ENCODE measurements at regions of chr20 and their contacts with region 1.

Region 1: GRCh38 chr20:31684153-31685015 is 38.3 kb downstream of the BCL2L1 start:
- DNase-seq: no peak
- ATAC-seq: peak; percentile 82
- H3K4me3 ChIP-seq: peak overlapping the region; percentile 44; the same call in 1 of the 2 replicates
- H3K27ac ChIP-seq: peak overlapping the region; percentile 35
- H3K4me1 ChIP-seq: peaks cover 26% of the 10 kb centered on the region
- H3K27me3 ChIP-seq: no peaks in the 10 kb centered on the region
- CTCF ChIP-seq: no peak
- EP300 ChIP-seq: no peak
- POLR2A ChIP-seq: no peak
- RAD21 ChIP-seq: no peak

Region 2: DNA sequence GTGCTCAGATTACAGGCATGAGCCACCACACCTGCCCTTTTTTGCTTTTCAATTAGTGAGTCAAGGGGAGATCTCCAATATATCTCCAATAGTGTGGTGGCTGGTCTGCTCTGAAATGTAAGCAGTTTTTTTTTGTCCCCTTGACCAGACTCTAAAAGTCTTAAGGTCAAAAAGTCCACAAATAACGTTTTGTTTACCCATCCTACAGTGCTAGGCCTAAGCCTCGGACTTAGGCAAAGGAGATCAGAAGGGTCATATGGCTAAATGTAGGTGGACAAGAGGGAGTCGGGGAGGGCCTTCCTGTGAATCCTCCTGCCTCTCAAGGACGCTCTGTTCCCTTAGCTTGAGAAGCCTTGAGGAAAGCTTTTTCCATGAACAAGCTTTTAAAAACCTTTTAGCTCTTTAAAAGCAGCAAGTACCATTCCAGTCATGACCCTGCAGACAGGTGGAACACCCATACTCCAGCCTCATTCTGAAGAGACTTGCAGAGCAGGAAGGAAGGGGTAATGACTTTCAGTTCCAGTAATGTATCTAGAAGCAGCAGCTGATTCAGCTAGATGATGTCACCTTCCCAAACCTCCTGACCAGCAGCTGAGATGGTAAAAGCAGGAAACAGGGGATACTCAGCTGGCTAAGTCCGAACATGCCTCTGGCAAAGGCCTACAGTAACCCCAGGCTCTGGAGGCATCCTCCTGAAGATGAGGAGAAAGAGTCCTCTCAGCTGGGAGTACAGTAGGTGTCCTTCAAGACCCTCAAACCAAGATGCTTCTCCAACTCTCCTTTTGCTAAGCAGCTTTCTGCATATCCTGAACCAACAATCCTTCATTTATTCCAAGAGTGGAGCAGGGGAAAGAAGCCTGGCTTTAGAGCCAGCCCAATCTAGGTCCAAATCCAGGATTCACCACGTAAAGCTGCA is 14.7 kb after region 1 on chr20:
- CTCF ChIA-PET with region 1: interaction called, 22 read pairs
- POLR2A ChIA-PET with region 1: interaction called, 8 read pairs
- RAD21 ChIA-PET with region 1: interaction called, 15 read pairs
- SMC1A ChIA-PET with region 1: interaction called, 26 read pairs
- in situ Hi-C with region 1: no loop called
- intact Hi-C with region 1: no loop called
- DNase-seq: no peak
- ATAC-seq: peak; percentile 96
- H3K4me3 ChIP-seq: peak overlapping the region; percentile 30; the same call in 1 of the 2 replicates
- H3K27ac ChIP-seq: peak overlapping the region; percentile 60
- H3K4me1 ChIP-seq: peaks cover 21% of the 10 kb centered on the region
- H3K27me3 ChIP-seq: no peaks in the 10 kb centered on the region
- CTCF ChIP-seq: no peak
- EP300 ChIP-seq: no peak
- POLR2A ChIP-seq: no peak
- RAD21 ChIP-seq: no peak

Region 3: DNA sequence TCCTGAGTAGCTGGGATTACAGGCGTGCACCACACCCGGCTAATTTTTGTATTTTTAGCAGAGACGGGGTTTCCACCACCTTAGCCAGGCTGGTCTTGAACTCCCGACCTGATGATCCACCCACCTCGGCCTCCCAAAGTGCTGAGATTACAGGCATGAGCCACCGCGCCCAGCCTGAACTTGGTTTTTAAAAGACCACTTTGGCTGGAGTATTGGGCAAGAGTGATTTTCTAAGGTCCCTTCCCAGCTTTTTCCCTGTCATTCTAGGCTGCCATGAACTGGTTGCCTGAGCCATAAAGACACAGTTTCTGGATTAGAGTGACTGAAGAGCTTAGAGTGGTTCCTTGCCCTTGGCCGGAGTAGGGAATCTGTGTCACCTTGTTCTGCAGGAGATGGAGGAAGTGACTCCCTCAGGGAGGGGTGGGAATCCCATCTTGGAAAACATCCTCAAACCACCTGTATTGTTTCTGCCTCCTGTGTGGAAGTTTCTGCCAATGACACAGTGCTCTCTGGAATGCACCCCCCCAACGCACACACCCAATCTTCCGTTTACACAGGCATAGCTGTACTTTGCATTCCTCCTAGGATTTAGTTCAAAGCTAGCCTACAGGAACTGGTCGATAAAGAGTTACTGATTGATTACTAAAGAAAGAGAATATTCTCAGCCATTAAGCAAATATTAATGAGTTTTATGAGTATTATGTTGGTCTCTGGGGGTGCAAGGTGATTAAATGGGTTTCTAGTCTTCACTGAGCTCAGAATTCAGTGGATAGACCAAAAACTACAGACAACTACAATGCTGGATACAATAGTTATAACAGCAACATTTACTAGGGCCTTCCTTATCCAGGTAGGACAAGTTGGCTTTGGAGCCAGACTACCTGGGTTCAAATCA is 20.1 kb after region 1 on chr20:
- CTCF ChIA-PET with region 1: interaction called, 22 read pairs
- POLR2A ChIA-PET with region 1: interaction called, 8 read pairs
- RAD21 ChIA-PET with region 1: interaction called, 21 read pairs
- SMC1A ChIA-PET with region 1: interaction called, 26 read pairs
- in situ Hi-C with region 1: no loop called
- intact Hi-C with region 1: no loop called
- DNase-seq: no peak
- ATAC-seq: no peak
- H3K4me3 ChIP-seq: no peak overlapping the region
- H3K27ac ChIP-seq: no peak overlapping the region
- H3K4me1 ChIP-seq: peaks cover 37% of the 10 kb centered on the region
- H3K27me3 ChIP-seq: no peaks in the 10 kb centered on the region
- CTCF ChIP-seq: no peak
- EP300 ChIP-seq: no peak
- POLR2A ChIP-seq: no peak
- RAD21 ChIP-seq: no peak

Region 4: DNA sequence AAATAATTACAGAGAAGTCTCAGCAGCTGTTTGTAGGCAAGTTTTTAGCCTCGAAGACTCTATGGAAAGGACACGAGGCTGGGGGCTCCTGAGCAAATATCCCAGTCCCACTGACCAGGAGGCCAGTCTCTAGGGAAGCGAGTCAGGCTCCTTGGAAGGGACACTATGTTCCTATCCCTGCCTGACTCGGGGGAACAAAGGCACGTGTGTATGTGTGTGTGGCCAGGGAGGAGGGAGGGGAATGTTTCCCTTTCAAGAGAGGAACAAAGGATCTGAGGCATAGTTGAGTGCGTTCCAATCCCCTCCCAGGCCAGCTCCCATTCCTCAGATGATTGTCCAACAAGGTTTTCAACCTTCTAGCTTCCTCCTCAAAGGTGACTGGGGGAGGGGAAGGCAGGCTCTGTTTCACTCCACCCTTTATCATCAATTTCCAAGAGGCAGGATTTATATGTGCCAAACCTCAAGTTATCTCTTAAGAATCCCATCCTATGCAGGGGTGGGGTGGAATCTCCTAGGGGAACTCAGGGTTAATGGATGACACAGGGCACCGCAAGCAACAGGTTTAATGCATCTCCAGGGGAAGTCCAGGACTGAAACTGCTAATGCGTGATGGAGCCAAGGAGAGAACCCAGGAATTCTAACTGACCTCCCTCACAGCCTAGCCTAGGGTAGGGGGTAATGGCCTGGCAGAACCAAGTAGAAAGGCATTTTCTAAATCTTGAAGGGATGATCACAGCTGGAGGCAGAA is 28.4 kb after region 1 on chr20:
- CTCF ChIA-PET with region 1: interaction called, 254 read pairs
- POLR2A ChIA-PET with region 1: interaction called, 36 read pairs
- RAD21 ChIA-PET with region 1: interaction called, 60 read pairs
- SMC1A ChIA-PET with region 1: interaction called, 146 read pairs
- in situ Hi-C with region 1: no loop called
- intact Hi-C with region 1: no loop called
- DNase-seq: no peak
- ATAC-seq: no peak
- H3K4me3 ChIP-seq: no peak overlapping the region
- H3K27ac ChIP-seq: no peak overlapping the region
- H3K4me1 ChIP-seq: peaks cover 28% of the 10 kb centered on the region
- H3K27me3 ChIP-seq: no peaks in the 10 kb centered on the region
- CTCF ChIP-seq: no peak
- EP300 ChIP-seq: no peak
- POLR2A ChIP-seq: no peak
- RAD21 ChIP-seq: no peak